ENCODE measurements at regions of chr10 and their contacts with region 1.

Region 1: DNA sequence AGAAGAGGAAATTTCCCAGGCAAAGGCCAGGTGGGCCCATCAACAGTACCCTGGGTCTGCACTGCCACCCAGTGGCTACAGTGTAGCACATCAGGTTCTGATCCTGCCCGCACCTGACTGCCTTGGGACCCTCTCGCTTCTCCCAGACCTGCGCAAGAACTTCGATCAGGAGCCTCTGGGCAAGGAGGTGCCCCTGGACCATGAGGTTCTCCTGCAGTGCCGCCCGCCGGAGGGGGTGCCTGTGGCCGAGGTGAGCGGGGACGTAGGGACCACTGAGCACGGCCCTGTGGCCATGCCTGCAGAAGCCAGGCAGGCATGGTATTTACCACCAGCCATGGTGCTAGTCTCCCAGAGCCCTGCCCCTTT is 33.9 kb upstream of the SLC29A3 start:
- DNase-seq: peak; percentile 34 to 62 (median 46)
- H3K4me3 ChIP-seq: no peak overlapping the region
- H3K27ac ChIP-seq: no peak overlapping the region
- H3K4me1 ChIP-seq: peaks cover 0 to 13% (median 11%) of the 10 kb centered on the region in 4 experiments
- H3K27me3 ChIP-seq: no peaks in the 10 kb centered on the region

Region 2: GRCh38 chr10:70903262-70903921 is 381.8 kb before region 1 on chr10:
- CTCF ChIA-PET with region 1: interaction called, 53 read pairs
- POLR2A ChIA-PET with region 1: no interaction called
- DNase-seq: peak; percentile 41 to 61 (median 57)
- H3K4me3 ChIP-seq: no peak overlapping the region
- H3K27ac ChIP-seq: no peak overlapping the region
- H3K4me1 ChIP-seq: no peaks in the 10 kb centered on the region
- H3K27me3 ChIP-seq: no peaks in the 10 kb centered on the region

Region 3: GRCh38 chr10:70920565-70920964 is 364.6 kb before region 1 on chr10:
- CTCF ChIA-PET with region 1: interaction called, 36 read pairs
- POLR2A ChIA-PET with region 1: no interaction called
- DNase-seq: no peak
- H3K4me3 ChIP-seq: no peak overlapping the region
- H3K27ac ChIP-seq: no peak overlapping the region
- H3K4me1 ChIP-seq: no peaks in the 10 kb centered on the region
- H3K27me3 ChIP-seq: peaks cover 0 to 3% (median 0%) of the 10 kb centered on the region in 5 experiments

Region 4: DNA sequence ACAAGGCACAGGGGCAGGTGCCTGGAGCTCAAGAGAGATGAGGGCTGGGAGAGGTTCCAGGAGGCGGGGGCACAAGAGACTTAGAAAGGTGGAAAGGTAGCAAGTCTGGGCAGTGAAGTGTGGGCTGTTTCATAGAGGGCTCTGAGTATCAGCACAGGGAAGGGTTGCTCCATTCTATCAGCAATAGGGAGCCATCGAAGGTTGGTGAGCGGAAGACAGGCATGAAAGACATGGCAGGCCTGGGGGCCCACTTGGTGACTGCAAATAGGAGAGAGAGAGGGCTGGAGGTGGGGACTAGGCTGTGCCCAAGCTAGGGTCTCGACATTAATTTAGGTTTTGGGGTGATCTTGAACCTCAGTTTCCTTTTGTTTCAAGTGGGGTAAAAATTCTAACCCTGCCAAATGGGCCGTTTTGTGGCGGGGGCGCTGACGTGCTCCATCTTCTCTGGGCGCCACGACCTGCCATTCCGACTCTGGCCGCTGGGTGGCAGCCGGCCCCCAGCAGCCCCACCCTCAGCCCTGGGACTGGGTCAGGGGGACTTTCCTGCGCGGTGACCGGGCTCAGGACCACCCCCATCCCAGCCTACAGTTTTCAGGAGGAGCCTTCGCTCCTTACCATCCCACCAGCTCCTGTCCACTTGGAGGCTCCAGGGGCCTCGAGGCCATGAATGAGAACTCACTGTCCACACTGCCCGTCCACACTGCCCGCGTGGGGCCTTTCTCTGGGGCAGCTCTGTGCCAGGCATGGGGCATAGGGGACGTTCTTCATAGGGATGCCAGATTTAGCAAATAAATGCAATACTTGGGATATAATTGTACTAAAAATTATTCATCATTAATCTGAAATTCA is 359.6 kb before region 1 on chr10:
- CTCF ChIA-PET with region 1: interaction called, 36 read pairs
- POLR2A ChIA-PET with region 1: no interaction called
- DNase-seq: peak; percentile 28 to 46 (median 43)
- H3K4me3 ChIP-seq: no peak overlapping the region
- H3K27ac ChIP-seq: no peak overlapping the region
- H3K4me1 ChIP-seq: no peaks in the 10 kb centered on the region
- H3K27me3 ChIP-seq: no peaks in the 10 kb centered on the region

Region 5: GRCh38 chr10:71191531-71192076 is 93.6 kb before region 1 on chr10:
- CTCF ChIA-PET with region 1: no interaction called
- POLR2A ChIA-PET with region 1: no interaction called
- DNase-seq: no peak
- H3K4me3 ChIP-seq: no peak overlapping the region
- H3K27ac ChIP-seq: no peak overlapping the region
- H3K4me1 ChIP-seq: no peaks in the 10 kb centered on the region
- H3K27me3 ChIP-seq: peaks cover 0 to 3% (median 0%) of the 10 kb centered on the region in 5 experiments

Region 6: GRCh38 chr10:71250405-71250804 is 34.8 kb before region 1 on chr10:
- CTCF ChIA-PET with region 1: interaction called, 11 read pairs
- POLR2A ChIA-PET with region 1: no interaction called
- DNase-seq: peak in 2 of 3 donors; percentile 60 to 63
- H3K4me3 ChIP-seq: no peak overlapping the region
- H3K27ac ChIP-seq: no peak overlapping the region
- H3K4me1 ChIP-seq: peaks cover 7 to 47% (median 29%) of the 10 kb centered on the region in 4 experiments
- H3K27me3 ChIP-seq: no peaks in the 10 kb centered on the region

Region 7: DNA sequence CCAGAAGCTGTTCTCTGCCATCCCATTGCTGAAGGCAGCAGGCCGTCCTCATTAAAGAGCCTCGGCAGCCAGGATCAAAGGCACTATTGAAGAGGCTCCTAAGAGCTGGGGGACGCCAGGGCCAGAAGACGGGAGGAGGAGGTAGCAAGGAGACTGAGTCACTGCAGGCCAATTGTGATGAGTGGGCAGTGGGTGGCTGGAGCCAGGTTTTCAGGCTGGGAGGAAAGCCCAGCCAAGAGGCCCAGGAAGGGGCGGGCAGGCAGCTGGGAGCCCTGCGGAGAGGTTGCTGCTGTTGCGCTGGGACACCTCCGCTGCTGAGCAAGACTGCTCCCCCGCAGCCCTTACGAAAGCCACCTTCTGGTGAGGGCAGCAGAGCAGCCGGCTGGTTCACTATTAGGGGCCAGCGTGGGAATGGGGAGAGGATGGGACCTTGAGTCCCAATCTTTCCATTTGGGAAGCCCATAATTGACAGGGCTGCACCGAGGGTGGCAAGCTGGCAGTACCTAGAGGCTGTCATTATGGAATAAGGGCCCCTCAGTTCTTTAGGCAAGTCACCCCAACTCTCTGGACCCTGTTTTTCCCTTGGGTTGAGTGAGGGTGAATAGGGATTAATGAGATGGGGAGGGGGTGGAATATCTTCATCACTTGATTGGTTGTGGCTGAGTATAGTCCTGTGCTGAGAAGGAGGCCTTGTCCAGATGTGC is 24.4 kb before region 1 on chr10:
- CTCF ChIA-PET with region 1: interaction called, 12 read pairs
- POLR2A ChIA-PET with region 1: no interaction called
- DNase-seq: no peak
- H3K4me3 ChIP-seq: no peak overlapping the region
- H3K27ac ChIP-seq: no peak overlapping the region
- H3K4me1 ChIP-seq: peaks cover 0 to 11% (median 8%) of the 10 kb centered on the region in 4 experiments
- H3K27me3 ChIP-seq: no peaks in the 10 kb centered on the region

Region 8: DNA sequence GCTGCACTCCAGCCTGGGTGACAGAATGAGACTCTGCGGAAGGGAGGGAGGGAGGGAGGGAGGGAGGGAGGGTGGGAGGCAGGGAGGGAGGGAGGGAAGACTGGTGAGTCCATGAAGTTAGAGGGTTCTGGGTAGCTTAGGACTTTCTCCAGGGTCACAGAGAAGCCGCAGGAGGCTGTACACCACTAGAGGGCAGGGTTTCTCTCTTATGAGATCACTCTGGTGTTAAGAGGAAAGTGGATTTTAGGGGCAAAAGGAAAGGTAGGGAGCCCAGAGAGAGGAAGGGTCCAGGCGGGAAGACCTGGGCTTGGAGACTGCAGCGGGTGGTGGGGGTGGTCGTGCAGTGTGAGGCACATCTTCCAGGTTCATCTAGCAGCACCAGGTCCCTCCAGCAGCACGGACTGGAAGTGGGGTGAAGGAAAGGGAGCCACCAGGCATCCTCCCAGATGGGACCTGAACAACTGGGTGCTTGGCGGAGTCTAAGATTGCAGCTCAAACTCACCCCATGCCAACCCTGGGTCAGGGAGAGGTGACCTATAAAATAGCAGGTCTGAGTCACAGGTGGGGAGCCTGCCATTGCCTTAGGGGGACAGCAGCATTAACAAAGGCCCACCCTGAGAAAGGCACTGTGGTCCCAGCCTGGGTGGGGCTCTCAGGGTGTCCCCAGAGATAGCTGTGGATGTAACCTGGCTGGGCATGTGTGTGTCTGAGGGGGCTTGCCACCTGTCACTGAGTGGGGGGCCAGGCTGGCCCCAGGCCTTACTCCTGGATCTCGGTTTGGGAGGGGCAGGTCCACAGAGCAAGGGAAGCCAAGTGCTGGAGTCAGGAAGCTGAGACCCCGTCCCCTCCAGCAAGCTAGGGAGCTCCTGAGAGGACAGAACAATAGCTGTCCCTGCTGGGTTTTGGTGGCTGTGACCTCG is 14.6 kb before region 1 on chr10:
- CTCF ChIA-PET with region 1: interaction called, 78 read pairs
- POLR2A ChIA-PET with region 1: no interaction called
- DNase-seq: peak; percentile 66 to 83 (median 78)
- H3K4me3 ChIP-seq: no peak overlapping the region
- H3K27ac ChIP-seq: no peak overlapping the region
- H3K4me1 ChIP-seq: peaks cover 3 to 38% (median 14%) of the 10 kb centered on the region in 4 experiments
- H3K27me3 ChIP-seq: no peaks in the 10 kb centered on the region

Measured in common myeloid progenitor, CD34-positive (primary cell).